Naive thymus-derived CD8-positive, alpha-beta T cell (primary cell): ENCODE measurements at regions of chr11 and their contacts with region 1.

Region 1: DNA sequence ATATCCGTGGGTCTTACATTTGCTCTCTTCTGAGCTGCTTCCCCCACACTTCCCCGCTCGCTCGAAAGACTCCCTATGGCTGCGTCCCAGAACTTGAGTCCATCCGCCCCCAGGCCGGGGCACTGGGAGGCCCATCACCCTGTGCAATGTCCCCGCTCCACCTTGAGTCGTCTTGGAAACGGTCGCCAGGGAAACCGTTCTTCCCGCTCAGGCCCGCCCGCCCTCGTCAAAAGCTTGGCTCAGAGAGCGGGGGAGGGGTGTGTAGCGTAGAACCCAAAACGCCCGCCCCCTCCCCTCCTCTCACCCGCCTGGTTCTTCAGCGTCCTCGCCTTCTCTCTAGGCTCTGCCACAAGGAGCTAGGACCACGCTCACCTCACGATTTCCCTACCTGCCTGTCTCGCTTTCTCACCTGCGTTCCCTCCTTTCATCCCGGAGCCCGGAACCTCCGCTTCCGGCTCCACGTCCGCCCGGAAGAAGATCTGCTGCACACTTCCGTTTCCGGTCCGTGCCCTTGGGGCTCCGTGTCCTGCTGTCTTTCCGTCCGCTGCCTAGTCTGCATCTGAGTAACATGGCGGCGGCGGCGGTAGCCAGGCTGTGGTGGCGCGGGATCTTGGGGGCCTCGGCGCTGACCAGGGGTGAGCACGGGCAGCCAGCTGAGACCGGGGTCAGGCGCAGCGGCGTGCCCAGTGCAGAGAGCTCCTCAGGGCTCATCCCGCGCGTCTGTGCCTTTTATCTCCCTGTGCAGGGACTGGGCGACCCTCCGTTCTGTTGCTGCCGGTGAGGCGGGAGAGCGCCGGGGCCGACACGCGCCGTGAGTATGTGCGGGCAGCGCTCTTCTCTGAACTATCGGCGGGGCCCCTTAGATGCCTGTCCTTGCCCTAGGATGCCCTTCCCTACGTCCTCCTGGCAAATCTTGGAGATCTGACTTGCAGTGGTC is at the starts of genes KBTBD4 and NDUFS3:
- DNase-seq: peak; percentile 78 to 94 (median 88)
- ATAC-seq: peak; percentile 93 to 95
- H3K4me3 Mint-ChIP-seq: peak within 1 kb of the TSS; percentile 93 to 100 (median 100)
- H3K27ac Mint-ChIP-seq: peak within 1 kb of the TSS; percentile 96 to 100 (median 99)
- H3K4me1 Mint-ChIP-seq: peaks cover 11 to 50% (median 48%) of the 10 kb centered on the region in 4 donors
- H3K27me3 Mint-ChIP-seq: peaks cover 0 to 2% (median 0%) of the 10 kb centered on the region in 5 donors
- polyA plus RNA-seq, gene KBTBD4: 44.3 to 45.1 (median 44.3) TPM
- polyA plus RNA-seq, gene NDUFS3: 92.0 to 109 (median 101) TPM

Region 2: DNA sequence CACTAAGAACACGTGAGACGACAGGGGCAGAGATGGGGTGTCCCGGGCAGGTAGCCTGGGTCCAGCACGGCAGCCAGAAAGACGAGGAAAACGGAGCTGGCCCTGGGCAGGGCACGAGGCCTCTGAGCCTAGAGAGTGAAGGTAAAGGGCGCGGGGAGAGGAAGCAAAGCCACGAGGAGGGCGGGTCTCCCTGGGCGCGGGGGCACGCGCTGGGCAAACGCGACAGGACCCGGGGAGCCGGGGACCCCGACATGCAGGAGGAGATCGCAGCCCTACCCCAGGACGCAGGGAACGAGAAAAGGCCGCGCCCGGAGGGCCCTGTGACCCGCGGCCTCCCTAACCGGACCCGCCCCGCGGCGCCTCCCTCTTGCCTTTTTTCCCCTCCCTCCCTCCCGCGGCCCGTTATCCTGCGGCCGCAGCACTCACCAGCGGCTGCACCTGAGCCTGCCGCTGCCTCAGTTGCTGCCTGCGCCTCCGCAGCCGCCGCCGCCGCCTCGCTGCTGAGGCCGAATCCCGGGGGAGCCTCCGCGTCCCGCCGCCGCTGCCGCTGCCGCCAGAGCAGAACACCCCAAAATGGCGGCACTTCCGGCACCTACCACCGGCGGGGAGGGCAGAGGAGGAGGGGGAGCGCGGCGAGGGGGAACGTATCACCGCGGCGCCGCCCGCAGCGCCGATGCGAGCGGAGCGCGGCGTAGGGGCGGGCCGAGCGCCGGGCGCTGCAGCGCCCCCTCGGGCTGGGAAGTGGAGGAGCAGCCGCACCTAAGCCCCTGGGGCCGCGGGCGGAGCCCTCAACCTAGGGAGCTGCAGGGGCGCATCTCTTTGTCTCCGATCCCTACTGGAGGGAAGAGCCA is 26.0 kb before region 1 on chr11 and contains the start of gene CELF1:
- POLR2A ChIA-PET with region 1: interaction called, 26 read pairs
- DNase-seq: peak; percentile 87 to 94 (median 92)
- ATAC-seq: peak; percentile 88 to 94
- H3K4me3 Mint-ChIP-seq: peak within 1 kb of the TSS; percentile 94 to 98 (median 96)
- H3K27ac Mint-ChIP-seq: peak within 1 kb of the TSS; percentile 90 to 98 (median 97)
- H3K4me1 Mint-ChIP-seq: peaks cover 17 to 49% (median 43%) of the 10 kb centered on the region in 4 donors
- H3K27me3 Mint-ChIP-seq: no peaks in the 10 kb centered on the region
- polyA plus RNA-seq, gene CELF1: 45.3 to 79.3 (median 55.3) TPM

Region 3: DNA sequence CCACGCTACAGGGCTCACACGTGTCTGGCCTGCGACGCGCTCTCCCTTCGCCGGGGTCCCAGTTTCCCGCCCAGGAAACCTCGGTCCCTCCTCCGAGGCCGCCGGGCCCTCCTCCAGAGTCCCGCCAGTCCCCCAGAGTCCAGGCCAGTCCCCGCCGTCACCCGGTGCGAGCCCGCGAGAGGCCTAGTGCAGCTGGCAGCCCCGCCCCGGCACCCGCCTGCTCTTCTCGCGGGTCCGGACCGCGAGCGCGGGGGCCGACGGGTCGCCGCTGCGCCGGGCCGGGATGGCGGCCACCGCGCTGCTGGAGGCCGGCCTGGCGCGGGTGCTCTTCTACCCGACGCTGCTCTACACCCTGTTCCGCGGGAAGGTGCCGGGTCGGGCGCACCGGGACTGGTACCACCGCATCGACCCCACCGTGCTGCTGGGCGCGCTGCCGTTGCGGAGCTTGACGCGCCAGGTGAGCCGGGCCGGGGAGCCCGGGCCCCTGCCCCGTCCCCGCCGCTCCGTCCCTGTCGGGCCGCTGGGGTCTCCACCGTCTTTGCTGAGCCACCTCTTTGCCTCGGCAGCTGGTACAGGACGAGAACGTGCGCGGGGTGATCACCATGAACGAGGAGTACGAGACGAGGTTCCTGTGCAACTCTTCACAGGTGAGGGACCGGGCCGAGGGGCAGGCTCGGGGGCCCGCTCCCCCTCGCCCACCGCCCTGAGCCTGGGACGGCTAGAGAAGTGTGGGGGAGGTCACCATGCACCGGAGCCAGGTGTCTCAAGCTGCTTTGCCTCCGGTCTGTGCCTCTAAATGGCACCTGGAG is 13.2 kb before region 1 on chr11 and contains the start of gene PTPMT1:
- POLR2A ChIA-PET with region 1: interaction called, 38 read pairs
- DNase-seq: peak; percentile 38 to 78 (median 55)
- ATAC-seq: peak; percentile 88 to 89
- H3K4me3 Mint-ChIP-seq: peak within 1 kb of the TSS; percentile 80 to 90 (median 83)
- H3K27ac Mint-ChIP-seq: peak within 1 kb of the TSS; percentile 57 to 93 (median 86)
- H3K4me1 Mint-ChIP-seq: peaks cover 7 to 39% (median 21%) of the 10 kb centered on the region in 4 donors
- H3K27me3 Mint-ChIP-seq: no peaks in the 10 kb centered on the region
- polyA plus RNA-seq, gene PTPMT1: 58.7 to 73.3 (median 71.0) TPM

Region 4: GRCh38 chr11:47589584-47589976 is 10.8 kb after region 1 on chr11:
- POLR2A ChIA-PET with region 1: no interaction called
- DNase-seq: no peak
- ATAC-seq: no peak
- H3K4me3 Mint-ChIP-seq: no peak overlapping the region
- H3K27ac Mint-ChIP-seq: no peak overlapping the region
- H3K4me1 Mint-ChIP-seq: peaks cover 6 to 23% (median 12%) of the 10 kb centered on the region in 4 donors
- H3K27me3 Mint-ChIP-seq: peaks cover 9 to 32% (median 20%) of the 10 kb centered on the region in 5 donors

Region 5: DNA sequence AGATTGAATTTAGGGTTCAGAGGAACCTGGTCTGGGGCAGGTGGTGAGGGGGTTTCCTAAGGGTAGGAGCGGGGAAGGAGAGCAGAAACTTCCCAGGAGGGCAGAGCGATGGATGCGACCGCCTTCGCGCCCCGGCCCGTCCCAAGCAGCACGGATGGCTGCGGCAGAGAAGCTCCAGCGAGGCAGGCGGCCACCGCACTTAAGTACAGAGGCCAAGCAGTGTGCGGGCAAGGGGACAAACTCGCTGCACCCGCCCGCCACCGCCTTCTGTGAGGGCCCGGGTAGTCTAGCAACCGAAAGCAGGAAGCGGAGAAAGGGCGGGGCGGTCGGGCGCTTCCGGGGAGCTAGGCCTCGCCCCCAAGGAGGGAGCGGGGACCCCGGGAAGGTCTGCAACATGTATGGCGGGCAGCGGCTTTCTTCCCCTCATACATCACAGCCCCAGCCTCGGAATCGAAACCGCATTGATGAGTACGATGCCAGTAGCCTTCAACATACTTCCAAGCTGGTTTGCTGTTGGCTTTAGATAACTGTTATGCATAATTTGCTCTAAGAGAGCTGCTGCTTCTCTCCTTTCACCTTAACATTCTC is 136.4 kb after region 1 on chr11 and contains the start of gene AGBL2:
- POLR2A ChIA-PET with region 1: interaction called, 17 read pairs
- DNase-seq: peak; percentile 79 to 92 (median 82)
- ATAC-seq: peak; percentile 97
- H3K4me3 Mint-ChIP-seq: peak within 1 kb of the TSS; percentile 93 to 99 (median 96)
- H3K27ac Mint-ChIP-seq: peak within 1 kb of the TSS; percentile 93 to 100 (median 98)
- H3K4me1 Mint-ChIP-seq: peaks cover 4 to 18% (median 13%) of the 10 kb centered on the region in 4 donors
- H3K27me3 Mint-ChIP-seq: no peaks in the 10 kb centered on the region
- polyA plus RNA-seq, gene AGBL2: 1.5 to 2.9 (median 2.1) TPM